ENCODE measurements at regions of chr16 and their contacts with region 1.

Region 1: GRCh38 chr16:46689365-46690280 is at the start of gene ORC6:
- DNase-seq: peak; percentile 98 to 99
- ATAC-seq: peak; percentile 78
- total RNA-seq, gene ORC6: 3.0 to 8.6 TPM

Region 2: GRCh38 chr16:46789499-46790414 is 100.1 kb after region 1 on chr16:
- intact Hi-C with region 1: loop called in 1 of 2 experiments (anchors 10 kb)
- DNase-seq: peak; percentile 85 to 87
- ATAC-seq: peak; percentile 98

Region 3: DNA sequence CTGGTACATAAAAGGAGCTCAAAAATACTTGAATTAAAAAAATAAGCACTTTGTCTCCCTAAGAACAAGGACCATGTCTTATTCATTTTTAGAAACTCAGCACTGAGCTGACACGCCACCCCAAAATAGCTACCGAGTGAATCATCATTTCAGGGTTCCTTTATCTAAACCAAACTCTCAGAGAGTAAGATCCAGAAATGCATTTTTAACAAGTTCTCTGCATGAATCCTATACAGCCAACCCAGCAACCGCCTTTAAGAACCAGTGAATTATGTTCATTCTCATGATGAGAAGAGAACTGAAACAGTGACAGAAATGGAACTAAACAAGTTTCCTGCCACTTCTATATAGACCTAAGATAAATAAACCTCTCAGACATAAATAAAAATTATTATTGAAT is 132.6 kb after region 1 on chr16:
- intact Hi-C with region 1: loop called in 1 of 2 experiments (anchors 10 kb)
- DNase-seq: no peak
- ATAC-seq: no peak